ENCODE measurements at regions of chr9 and their contacts with region 1.

Region 1: DNA sequence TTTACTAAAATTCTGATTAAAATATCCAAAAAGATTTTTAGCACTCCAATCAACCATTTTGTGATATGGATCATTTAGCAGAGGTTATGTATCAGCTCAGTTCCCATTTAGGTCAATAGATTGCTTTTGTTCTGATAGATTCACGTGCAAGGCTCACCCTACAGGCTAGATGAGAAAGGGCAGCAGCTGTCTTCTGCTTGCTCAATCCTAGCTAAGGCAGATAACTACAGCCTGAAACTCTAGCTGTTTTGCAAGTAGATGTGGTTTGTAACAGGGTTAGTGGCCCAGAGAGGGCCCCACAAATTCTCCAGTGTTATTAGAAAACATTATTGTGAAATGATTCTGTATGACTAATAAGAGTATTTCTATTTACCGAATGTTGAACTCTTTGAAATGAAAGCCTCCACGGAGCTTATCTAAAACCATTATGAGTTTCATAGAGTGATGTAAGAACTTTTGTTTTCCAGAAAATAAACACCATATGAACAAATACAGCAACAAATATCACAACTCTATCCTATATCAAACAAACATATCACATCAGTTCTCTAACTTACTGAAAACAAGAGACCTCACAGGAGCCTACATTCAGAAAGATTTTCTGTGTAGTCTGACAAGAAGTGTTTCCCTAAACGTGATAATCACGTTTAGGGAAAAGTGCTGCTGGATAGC is 841.9 kb upstream of the ACO1 start:
- DNase-seq: peak; percentile 12
- H3K4me3 ChIP-seq: no peak overlapping the region
- CTCF ChIP-seq: peak; percentile 24

Region 2: DNA sequence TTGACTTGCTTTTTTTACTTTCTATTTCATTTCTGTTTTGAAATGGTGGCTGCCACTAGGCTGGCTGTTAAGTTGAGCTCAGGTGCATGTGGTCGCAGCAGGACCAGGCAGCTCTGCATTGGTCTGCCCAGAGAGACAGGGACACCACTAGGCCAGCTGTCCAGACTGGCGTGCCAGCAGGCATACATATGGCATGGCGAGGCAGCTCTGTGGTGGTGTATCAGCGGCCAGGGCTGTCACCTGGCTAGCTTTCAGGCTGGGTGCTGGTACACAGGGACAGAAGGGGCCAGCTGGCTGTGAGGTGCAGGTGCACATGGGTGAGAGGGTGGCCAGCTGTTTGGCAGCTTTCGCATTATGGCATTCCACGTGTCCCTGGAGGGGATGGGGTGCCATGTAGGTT is 187.9 kb after region 1 on chr9:
- in situ Hi-C with region 1: loop called (anchors 25 kb)
- DNase-seq: no peak
- H3K4me3 ChIP-seq: no peak overlapping the region
- CTCF ChIP-seq: no peak